ENCODE measurements at regions of chr5 and their contacts with region 1.

Region 1: DNA sequence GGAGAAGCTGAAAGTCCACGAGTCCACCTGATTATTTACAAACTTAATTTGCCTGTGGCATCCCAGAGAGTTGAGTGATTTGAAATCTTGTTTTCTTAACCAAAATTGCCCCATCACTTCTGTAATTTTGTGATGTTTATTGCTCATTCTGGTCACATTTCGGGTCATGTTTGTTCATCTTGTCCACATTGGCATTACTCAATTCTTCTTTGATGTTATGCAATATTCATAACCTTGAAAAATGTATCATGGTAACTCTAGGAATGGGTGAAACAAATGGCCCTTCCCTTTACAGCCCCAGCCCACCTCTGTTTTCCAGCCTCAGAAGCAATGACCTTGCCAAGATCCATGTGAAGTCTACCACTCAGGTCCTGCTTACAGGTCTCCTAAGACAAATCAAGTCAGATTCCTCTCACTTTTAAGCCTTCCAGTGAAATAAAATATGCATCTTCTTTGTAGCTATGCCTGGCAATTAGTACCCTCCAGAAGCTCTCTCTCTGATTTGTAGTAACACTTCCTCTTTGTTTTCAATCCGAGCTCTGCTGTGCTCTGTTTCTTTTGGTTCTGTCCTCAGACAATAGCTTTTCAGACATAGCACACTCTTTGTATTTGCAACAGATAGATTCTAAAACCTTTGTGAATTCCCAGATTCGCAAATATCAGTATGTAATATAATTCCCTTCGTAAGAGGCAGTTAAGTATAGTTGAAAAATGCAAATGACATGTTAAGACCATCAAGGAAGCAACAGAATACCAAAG is 330.3 kb upstream of the IRX1 start:
- DNase-seq: no peak
- H3K4me3 ChIP-seq: peak overlapping the region in 2 of 59 donors; percentile 8 to 20
- H3K27ac ChIP-seq: peak overlapping the region; percentile 18 to 99 (median 88)
- H3K27me3 ChIP-seq: peaks cover 0 to 13% (median 0%) of the 10 kb centered on the region in 45 donors
- CTCF ChIP-seq: no peak

Region 2: DNA sequence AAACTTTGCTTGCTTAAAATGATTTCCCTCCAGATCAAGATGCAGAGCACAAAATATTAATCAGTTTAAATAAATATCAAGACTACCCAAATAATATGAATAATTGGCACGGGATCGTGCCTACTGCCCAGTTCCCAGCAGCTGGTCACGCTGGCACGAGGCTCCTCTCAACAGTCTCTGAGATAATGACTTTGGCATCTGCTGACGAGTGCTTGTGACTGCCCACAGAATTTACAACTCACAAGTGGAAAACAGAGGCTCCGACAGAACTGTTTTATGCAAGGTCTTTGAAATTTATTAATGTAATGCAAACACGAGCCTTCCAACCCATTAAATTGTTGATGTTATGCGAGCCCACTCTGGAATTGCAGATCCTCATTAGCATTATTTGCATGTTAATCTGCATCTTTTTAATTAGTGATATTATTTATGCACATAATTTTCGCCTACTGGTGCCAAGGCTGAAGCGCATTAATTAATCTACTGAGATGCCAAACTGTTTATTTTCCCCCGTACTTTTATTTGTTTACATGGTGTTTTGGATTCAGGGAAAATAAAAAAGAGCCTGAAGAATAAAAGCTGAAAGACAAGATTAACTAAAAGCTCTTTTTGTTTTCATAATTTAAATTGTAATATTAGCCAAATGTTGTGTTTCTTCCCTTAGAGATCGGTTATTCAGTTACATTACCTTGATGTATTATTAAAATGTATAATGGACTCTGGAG is 38.9 kb before region 1 on chr5:
- intact Hi-C with region 1: loop called in 1 of 2 experiments (anchors 5 kb)
- DNase-seq: peak in 5 of 10 donors; percentile 36 to 71 (median 56)
- H3K4me3 ChIP-seq: peak overlapping the region in 22 of 59 donors; percentile 1 to 49 (median 20)
- H3K27ac ChIP-seq: peak overlapping the region in 5 of 59 donors; percentile 3 to 31 (median 5)
- H3K27me3 ChIP-seq: no peaks in the 10 kb centered on the region
- CTCF ChIP-seq: peak in 1 of 56 donors; percentile 24

Region 3: DNA sequence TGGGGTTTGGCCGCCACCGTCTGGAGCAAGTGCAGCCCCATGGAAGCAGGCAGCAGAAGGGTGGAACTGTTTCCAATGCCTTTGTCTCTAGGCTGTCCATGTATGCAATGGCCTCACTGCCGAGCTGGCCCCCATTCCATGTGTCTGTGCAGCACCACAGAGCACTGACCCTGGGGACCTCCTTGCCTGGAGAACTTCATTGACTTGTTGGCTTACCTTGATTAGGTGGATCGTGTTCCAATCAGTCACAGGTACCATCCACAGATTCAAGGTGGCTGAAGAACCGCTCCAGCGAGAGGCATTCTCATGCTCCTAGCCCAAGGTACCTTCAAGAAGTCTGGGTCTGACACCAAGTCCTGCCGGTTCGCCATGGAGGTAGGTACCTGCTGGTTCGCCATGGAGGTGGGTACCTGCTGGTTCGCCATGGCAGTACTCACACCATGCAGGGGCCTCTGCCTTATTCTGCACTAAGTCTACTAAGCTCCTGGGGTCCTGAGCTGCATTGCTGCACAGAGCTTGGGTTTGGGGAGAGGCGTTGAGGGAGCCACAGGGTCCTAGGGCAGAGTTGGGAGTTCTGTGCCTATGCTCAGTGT is 27.9 kb before region 1 on chr5:
- intact Hi-C with region 1: no loop called
- DNase-seq: no peak
- H3K4me3 ChIP-seq: no peak overlapping the region
- H3K27ac ChIP-seq: no peak overlapping the region
- H3K27me3 ChIP-seq: no peaks in the 10 kb centered on the region
- CTCF ChIP-seq: no peak

Region 4: GRCh38 chr5:3531320-3531986 is 266.1 kb after region 1 on chr5:
- intact Hi-C with region 1: no loop called
- DNase-seq: no peak
- H3K4me3 ChIP-seq: no peak overlapping the region
- H3K27ac ChIP-seq: no peak overlapping the region
- H3K27me3 ChIP-seq: peaks cover 0 to 14% (median 0%) of the 10 kb centered on the region in 45 donors
- CTCF ChIP-seq: no peak

Measured in dorsolateral prefrontal cortex (tissue), 120 donors.